CD8-positive, alpha-beta T cell (primary cell): ENCODE measurements at regions of chr2 and their contacts with region 1.

Region 1: GRCh38 chr2:205680067-205680466 is 2.2 kb upstream of the NRP2 start:
- DNase-seq: peak in 7 of 9 experiments; percentile 19 to 56 (median 33)
- ATAC-seq: no peak
- H3K4me3 ChIP-seq: no peak overlapping the region
- H3K4me3 Mint-ChIP-seq: no peak overlapping the region
- H3K27ac ChIP-seq: no peak overlapping the region
- H3K27ac Mint-ChIP-seq: no peak overlapping the region
- H3K4me1 ChIP-seq: peaks cover 11% of the 10 kb centered on the region
- H3K4me1 Mint-ChIP-seq: peaks cover 21% of the 10 kb centered on the region
- H3K27me3 ChIP-seq: peaks cover 3 to 16% of the 10 kb centered on the region in 2 experiments
- H3K27me3 Mint-ChIP-seq: peaks cover 45% of the 10 kb centered on the region
- CTCF ChIP-seq: peak; percentile 37

Region 2: GRCh38 chr2:204145263-204145751 is 1534.8 kb before region 1 on chr2:
- CTCF ChIA-PET with region 1: interaction called, 3 read pairs
- POLR2A ChIA-PET with region 1: no interaction called
- intact Hi-C with region 1: loop called (anchors 2 to 10 kb)
- DNase-seq: peak; percentile 50 to 84 (median 76)
- ATAC-seq: peak; percentile 92
- H3K4me3 ChIP-seq: peak overlapping the region; percentile 46 to 49
- H3K4me3 Mint-ChIP-seq: peak overlapping the region; percentile 90
- H3K27ac ChIP-seq: no peak overlapping the region
- H3K27ac Mint-ChIP-seq: peak overlapping the region; percentile 84
- H3K4me1 ChIP-seq: no peaks in the 10 kb centered on the region
- H3K4me1 Mint-ChIP-seq: peaks cover 10% of the 10 kb centered on the region
- H3K27me3 ChIP-seq: no peaks in the 10 kb centered on the region
- H3K27me3 Mint-ChIP-seq: peaks cover 18% of the 10 kb centered on the region
- CTCF ChIP-seq: peak; percentile 98

Region 3: DNA sequence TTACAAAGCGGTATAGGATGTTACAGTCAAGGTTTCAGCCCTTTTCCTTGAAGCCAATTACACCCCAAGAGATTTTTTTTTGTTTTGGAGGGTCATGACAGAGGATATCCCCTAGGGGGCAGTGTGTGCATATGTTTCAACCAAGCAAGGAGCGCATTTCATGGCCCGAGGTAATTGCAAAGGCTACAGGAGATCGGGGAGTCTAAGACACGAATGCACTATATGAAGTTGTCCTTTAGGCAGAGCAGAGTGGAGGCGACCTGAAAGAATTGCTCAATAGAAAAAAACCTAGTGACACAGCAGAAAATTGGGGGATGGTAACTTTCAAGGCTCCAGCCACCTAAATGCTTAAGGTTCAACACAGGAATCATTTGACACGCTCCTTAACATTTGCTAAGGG is 1354.6 kb before region 1 on chr2:
- CTCF ChIA-PET with region 1: interaction called, 10 read pairs
- POLR2A ChIA-PET with region 1: no interaction called
- intact Hi-C with region 1: loop called (anchors 1 kb)
- DNase-seq: peak; percentile 13 to 71 (median 45)
- ATAC-seq: peak; percentile 44
- H3K4me3 ChIP-seq: no peak overlapping the region
- H3K4me3 Mint-ChIP-seq: no peak overlapping the region
- H3K27ac ChIP-seq: no peak overlapping the region
- H3K27ac Mint-ChIP-seq: no peak overlapping the region
- H3K4me1 ChIP-seq: no peaks in the 10 kb centered on the region
- H3K4me1 Mint-ChIP-seq: peaks cover 3% of the 10 kb centered on the region
- H3K27me3 ChIP-seq: no peaks in the 10 kb centered on the region
- H3K27me3 Mint-ChIP-seq: peaks cover 8% of the 10 kb centered on the region
- CTCF ChIP-seq: peak; percentile 71

Region 4: GRCh38 chr2:204871231-204871953 is 808.7 kb before region 1 on chr2:
- CTCF ChIA-PET with region 1: interaction called, 14 read pairs
- POLR2A ChIA-PET with region 1: interaction called, 3 read pairs
- intact Hi-C with region 1: loop called (anchors 1 to 5 kb)
- DNase-seq: peak in 2 of 9 experiments; percentile 18 to 53
- ATAC-seq: no peak
- H3K4me3 ChIP-seq: no peak overlapping the region
- H3K4me3 Mint-ChIP-seq: no peak overlapping the region
- H3K27ac ChIP-seq: no peak overlapping the region
- H3K27ac Mint-ChIP-seq: no peak overlapping the region
- H3K4me1 ChIP-seq: peaks cover 17% of the 10 kb centered on the region
- H3K4me1 Mint-ChIP-seq: peaks cover 22% of the 10 kb centered on the region
- H3K27me3 ChIP-seq: no peaks in the 10 kb centered on the region
- H3K27me3 Mint-ChIP-seq: no peaks in the 10 kb centered on the region
- CTCF ChIP-seq: peak; percentile 34

Region 5: GRCh38 chr2:205662206-205662965 is 17.7 kb before region 1 on chr2:
- CTCF ChIA-PET with region 1: interaction called, 11 read pairs
- POLR2A ChIA-PET with region 1: no interaction called
- intact Hi-C with region 1: no loop called
- DNase-seq: no peak
- ATAC-seq: no peak
- H3K4me3 ChIP-seq: no peak overlapping the region
- H3K4me3 Mint-ChIP-seq: no peak overlapping the region
- H3K27ac ChIP-seq: no peak overlapping the region
- H3K27ac Mint-ChIP-seq: no peak overlapping the region
- H3K4me1 ChIP-seq: peaks cover 11% of the 10 kb centered on the region
- H3K4me1 Mint-ChIP-seq: peaks cover 16% of the 10 kb centered on the region
- H3K27me3 ChIP-seq: no peaks in the 10 kb centered on the region
- H3K27me3 Mint-ChIP-seq: peaks cover 1% of the 10 kb centered on the region
- CTCF ChIP-seq: no peak